PC-9 (cell line): ENCODE measurements at regions of chr2 and their contacts with region 1.

Region 1: DNA sequence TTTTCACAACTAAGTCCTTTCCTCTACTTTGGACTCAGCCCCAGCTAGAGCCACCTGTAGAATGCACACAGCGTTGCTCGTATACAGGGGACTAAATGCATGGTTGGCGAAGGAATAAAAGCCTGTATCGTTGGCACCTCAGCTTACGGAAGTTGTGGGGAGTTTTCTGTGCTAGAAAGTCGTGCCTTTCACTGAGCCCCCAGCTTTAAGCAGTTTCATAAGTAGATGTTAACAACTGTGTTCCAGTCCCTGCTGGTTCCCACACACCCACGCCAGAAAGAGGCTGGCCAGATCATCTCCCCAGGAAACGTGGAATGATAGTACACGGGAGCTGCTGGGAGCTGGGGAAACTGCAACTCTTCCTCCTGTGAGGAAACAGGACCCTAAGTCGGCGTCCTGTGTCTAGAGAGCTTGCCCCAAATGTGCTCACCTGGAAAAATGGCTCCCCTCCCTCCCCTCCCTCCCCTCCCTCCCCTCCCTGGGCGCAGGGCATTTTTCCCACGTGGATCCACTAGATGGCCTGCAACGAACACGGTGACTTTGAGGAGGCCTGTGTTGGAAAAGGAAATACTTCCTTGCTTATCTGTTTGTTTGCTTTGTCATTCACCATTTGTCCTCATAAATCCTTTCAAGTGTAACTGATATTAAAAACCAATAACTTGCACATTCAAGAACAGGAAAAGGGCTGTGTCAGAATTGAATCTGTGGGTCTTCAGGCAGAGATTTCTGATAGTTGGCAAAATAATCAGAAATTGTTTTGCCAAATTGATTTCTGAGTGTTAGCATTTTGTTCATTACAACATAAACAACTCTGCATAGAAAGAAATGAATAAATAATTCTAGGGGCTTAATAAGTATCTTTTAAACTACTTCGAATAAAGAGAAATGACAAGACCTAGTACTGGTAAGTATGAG is 43.9 kb upstream of the RFX8 start:
- DNase-seq: peak; percentile 52 to 95
- H3K4me3 ChIP-seq: peak overlapping the region; percentile 14; the same call in 1 of the 2 replicates
- H3K27ac ChIP-seq: peak overlapping the region; percentile 98
- H3K4me1 ChIP-seq: peaks cover 55% of the 10 kb centered on the region
- H3K27me3 ChIP-seq: no peaks in the 10 kb centered on the region
- CTCF ChIP-seq: peak; percentile 55; the same call in 1 of the 2 replicates

Region 2: GRCh38 chr2:101410716-101411211 is 108.1 kb before region 1 on chr2:
- CTCF ChIA-PET with region 1: no interaction called
- POLR2A ChIA-PET with region 1: interaction called, 8 read pairs
- intact Hi-C with region 1: loop called (anchors 1 kb)
- DNase-seq: peak; percentile 82 to 99
- H3K4me3 ChIP-seq: no peak overlapping the region
- H3K27ac ChIP-seq: peak overlapping the region; percentile 62
- H3K4me1 ChIP-seq: peaks cover 32% of the 10 kb centered on the region
- H3K27me3 ChIP-seq: no peaks in the 10 kb centered on the region
- CTCF ChIP-seq: no peak

Region 3: GRCh38 chr2:101446869-101447268 is 72.0 kb before region 1 on chr2:
- CTCF ChIA-PET with region 1: no interaction called
- POLR2A ChIA-PET with region 1: no interaction called
- intact Hi-C with region 1: no loop called
- DNase-seq: no peak
- H3K4me3 ChIP-seq: no peak overlapping the region
- H3K27ac ChIP-seq: peak overlapping the region; percentile 25; the same call in 1 of the 2 replicates
- H3K4me1 ChIP-seq: peaks cover 18% of the 10 kb centered on the region
- H3K27me3 ChIP-seq: no peaks in the 10 kb centered on the region
- CTCF ChIP-seq: no peak

Region 4: DNA sequence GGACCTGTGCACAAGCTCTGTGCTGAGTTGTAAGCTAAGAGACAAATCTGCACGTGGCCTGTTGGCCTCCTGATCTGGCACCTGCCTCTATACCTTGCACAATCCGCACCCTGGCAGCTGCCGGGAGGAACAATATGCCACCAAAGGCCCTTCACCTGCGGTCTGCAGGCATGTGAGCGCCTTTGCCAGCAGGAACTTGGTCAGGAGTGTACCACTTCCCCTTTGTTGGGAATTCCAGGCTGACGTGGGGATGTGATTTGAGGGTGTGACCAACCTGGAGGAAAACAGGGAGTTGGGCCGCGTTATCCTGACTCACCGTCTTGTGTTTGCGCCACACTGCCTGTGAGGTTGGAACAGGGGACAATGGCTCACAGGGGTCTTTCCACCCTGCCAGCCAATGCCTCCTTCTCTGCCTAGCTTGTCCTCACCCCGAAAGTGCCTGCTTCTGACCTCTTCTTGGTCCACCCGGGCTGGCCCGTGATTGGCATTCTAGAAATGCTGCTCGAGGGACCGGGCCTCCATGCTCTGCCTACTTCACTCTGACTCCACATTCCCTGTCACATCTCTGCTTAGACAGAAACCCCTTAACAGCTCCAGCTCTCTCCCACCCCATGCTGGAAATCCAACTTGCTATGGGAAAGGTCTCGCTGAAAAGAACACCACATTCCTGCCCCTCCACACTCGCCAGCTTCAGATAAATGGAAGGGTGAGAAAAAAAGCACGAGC is 111.6 kb after region 1 on chr2:
- CTCF ChIA-PET with region 1: no interaction called
- POLR2A ChIA-PET with region 1: interaction called, 6 read pairs
- intact Hi-C with region 1: loop called (anchors 1 kb)
- DNase-seq: peak; percentile 91 to 98
- H3K4me3 ChIP-seq: no peak overlapping the region
- H3K27ac ChIP-seq: peak overlapping the region; percentile 94
- H3K4me1 ChIP-seq: peaks cover 42% of the 10 kb centered on the region
- H3K27me3 ChIP-seq: no peaks in the 10 kb centered on the region
- CTCF ChIP-seq: no peak

Region 5: DNA sequence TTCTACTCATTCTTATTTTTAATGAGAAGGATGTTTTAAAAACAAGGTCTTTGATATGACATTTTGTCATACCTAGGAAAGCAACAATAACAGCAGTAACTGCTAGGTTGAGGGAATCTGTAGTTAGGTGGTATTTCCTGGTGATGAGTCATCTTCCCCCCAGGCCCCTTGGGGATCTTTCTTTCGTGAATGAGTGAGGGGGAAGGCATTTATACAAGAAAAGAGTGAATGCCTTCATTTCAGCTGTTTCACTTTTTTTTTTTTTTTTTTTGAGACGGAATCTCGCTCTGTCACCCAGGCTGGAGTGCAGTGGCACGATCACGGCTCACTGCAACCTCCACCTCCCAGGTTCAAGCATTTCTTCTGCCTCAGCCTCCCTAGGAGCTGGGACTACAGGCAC is 287.3 kb after region 1 on chr2:
- CTCF ChIA-PET with region 1: no interaction called
- POLR2A ChIA-PET with region 1: no interaction called
- intact Hi-C with region 1: loop called (anchors 2 kb)
- DNase-seq: peak; percentile 70 to 90
- H3K4me3 ChIP-seq: peak overlapping the region; percentile 11; the same call in 1 of the 2 replicates
- H3K27ac ChIP-seq: peak overlapping the region; percentile 80
- H3K4me1 ChIP-seq: peaks cover 68% of the 10 kb centered on the region
- H3K27me3 ChIP-seq: no peaks in the 10 kb centered on the region
- CTCF ChIP-seq: no peak